Activated naive CD4-positive, alpha-beta T cell treated with anti-CD3 and anti-CD28 coated beads, Interleukin-2, amount 10 ng/mL, durations not matched to agents 7 days and 5 days (primary cell): ENCODE measurements at regions of chr11 and their contacts with region 1.

Region 1: GRCh38 chr11:13335319-13335718 is 57.7 kb downstream of the BMAL1 start:
- DNase-seq: peak; percentile 79
- H3K4me3 Mint-ChIP-seq: no peak overlapping the region
- H3K27ac Mint-ChIP-seq: no peak overlapping the region
- H3K4me1 Mint-ChIP-seq: peaks cover 44% of the 10 kb centered on the region
- H3K27me3 Mint-ChIP-seq: no peaks in the 10 kb centered on the region

Region 2: DNA sequence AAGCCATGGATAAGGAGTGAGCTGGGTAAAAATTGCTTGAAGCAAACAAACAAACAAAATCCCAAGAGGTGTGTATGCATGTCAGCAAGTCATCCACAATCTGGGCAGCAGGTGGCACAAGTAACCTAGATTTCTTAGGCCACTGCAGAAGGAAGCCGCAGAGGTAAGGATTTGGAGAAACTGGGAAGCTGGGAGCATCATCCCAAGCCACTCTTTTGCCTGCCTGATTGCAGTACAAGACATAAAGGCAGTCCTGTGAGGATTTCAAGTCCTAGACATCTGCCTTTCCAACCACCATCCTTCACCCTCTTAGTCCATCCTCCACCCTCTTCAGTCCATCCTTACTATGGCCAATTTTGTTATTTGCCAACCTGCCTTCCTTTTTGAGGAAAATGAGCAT is 124.9 kb before region 1 on chr11:
- CTCF ChIA-PET with region 1: interaction called, 59 read pairs
- DNase-seq: peak; percentile 54
- H3K4me3 Mint-ChIP-seq: no peak overlapping the region
- H3K27ac Mint-ChIP-seq: no peak overlapping the region
- H3K4me1 Mint-ChIP-seq: peaks cover 33% of the 10 kb centered on the region
- H3K27me3 Mint-ChIP-seq: no peaks in the 10 kb centered on the region

Region 3: DNA sequence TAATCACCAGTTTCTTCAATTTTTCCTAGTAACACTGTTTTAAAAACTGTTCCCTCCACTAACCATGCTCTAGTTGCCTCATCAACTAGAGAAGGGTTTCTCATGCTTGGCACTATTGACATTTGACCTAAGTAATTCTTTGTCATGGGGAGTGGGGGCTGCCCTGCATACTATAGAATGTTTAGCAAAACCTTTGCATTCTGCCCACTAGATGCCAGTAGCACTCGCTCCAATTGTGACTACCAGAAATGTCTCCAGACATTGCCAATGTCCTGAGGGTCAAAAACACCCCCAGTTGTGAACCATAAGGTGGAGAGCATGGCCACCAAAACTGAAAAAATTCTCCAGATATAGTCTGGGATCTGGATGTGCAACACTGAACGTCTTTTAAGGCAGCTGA is 85.3 kb before region 1 on chr11:
- CTCF ChIA-PET with region 1: interaction called, 26 read pairs
- DNase-seq: no peak
- H3K4me3 Mint-ChIP-seq: no peak overlapping the region
- H3K27ac Mint-ChIP-seq: no peak overlapping the region
- H3K4me1 Mint-ChIP-seq: no peaks in the 10 kb centered on the region
- H3K27me3 Mint-ChIP-seq: peaks cover 21% of the 10 kb centered on the region

Region 4: GRCh38 chr11:13276832-13277767 is 58.2 kb before region 1 on chr11:
- CTCF ChIA-PET with region 1: interaction called, 32 read pairs
- DNase-seq: peak; percentile 98
- H3K4me3 Mint-ChIP-seq: peak overlapping the region; percentile 94
- H3K27ac Mint-ChIP-seq: peak overlapping the region; percentile 78
- H3K4me1 Mint-ChIP-seq: peaks cover 42% of the 10 kb centered on the region
- H3K27me3 Mint-ChIP-seq: peaks cover 44% of the 10 kb centered on the region

Region 5: GRCh38 chr11:13289081-13289480 is 46.2 kb before region 1 on chr11:
- CTCF ChIA-PET with region 1: interaction called, 28 read pairs
- DNase-seq: no peak
- H3K4me3 Mint-ChIP-seq: no peak overlapping the region
- H3K27ac Mint-ChIP-seq: no peak overlapping the region
- H3K4me1 Mint-ChIP-seq: peaks cover 33% of the 10 kb centered on the region
- H3K27me3 Mint-ChIP-seq: no peaks in the 10 kb centered on the region

Region 6: GRCh38 chr11:13297917-13298356 is 37.4 kb before region 1 on chr11:
- CTCF ChIA-PET with region 1: interaction called, 18 read pairs
- DNase-seq: peak; percentile 39
- H3K4me3 Mint-ChIP-seq: no peak overlapping the region
- H3K27ac Mint-ChIP-seq: peak overlapping the region; percentile 68
- H3K4me1 Mint-ChIP-seq: peaks cover 54% of the 10 kb centered on the region
- H3K27me3 Mint-ChIP-seq: no peaks in the 10 kb centered on the region

Region 7: GRCh38 chr11:13362596-13363109 is 27.3 kb after region 1 on chr11:
- CTCF ChIA-PET with region 1: no interaction called
- DNase-seq: no peak
- H3K4me3 Mint-ChIP-seq: no peak overlapping the region
- H3K27ac Mint-ChIP-seq: no peak overlapping the region
- H3K4me1 Mint-ChIP-seq: no peaks in the 10 kb centered on the region
- H3K27me3 Mint-ChIP-seq: no peaks in the 10 kb centered on the region